Testis (tissue), 5 donors: ENCODE measurements at regions of chr11 and their contacts with region 1.

Region 1: DNA sequence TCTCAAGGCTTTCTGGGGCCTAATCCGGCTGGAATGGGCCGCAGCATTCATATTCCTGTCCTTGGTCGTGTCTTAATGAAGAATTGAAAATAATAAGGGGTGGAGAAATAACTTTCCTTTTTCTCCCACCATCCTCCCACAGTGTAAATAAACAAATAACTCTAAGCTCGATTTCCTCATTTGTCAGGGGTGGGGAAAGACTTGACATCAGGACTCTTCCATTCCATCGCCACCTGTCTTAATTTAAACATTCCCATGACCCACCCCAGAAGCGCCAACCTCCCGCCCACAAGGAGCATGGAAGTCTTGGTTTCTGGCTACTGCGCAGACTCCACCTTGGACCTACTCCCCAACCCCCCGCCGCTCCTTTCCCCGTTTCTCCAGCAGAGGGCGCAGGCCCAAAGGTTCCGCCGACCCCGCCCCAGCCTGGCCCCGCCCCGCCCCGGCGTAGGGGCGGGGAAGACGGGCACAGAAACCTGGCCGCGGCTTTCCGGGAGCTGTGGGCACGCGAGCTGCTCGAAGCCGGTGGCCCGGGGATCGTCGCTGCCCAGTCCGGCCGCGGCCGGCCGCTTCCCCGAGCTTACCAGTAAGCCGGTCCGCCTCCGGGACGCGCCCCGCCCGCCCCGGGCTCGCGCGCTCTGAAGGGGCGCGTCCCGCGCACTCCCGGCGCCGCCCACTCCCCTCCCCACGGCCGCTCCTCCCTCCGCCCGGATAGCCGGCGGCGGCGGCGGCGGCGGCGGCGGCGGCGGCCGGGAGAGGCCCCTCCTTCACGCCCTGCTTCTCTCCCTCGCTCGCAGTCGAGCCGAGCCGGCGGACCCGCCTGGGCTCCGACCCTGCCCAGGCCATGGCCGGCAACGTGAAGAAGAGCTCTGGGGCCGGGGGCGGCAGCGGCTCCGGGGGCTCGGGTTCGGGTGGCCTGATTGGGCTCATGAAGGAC is at the start of gene CBL:
- DNase-seq: peak; percentile 97
- H3K4me3 ChIP-seq: peak within 1 kb of the TSS; percentile 90 to 91
- H3K27ac ChIP-seq: peak within 1 kb of the TSS; percentile 86 to 98
- H3K4me1 ChIP-seq: no peaks in the 10 kb centered on the region
- H3K27me3 ChIP-seq: no peaks in the 10 kb centered on the region
- CTCF ChIP-seq: peak; percentile 64 to 93 (median 89)
- POLR2A ChIP-seq: no peak
- total RNA-seq, gene CBL: 59.3 to 65.7 TPM

Region 2: GRCh38 chr11:119101759-119102423 is 104.0 kb before region 1 on chr11 and contains the start of gene DPAGT1:
- intact Hi-C with region 1: no loop called
- DNase-seq: peak; percentile 97
- H3K4me3 ChIP-seq: peak within 1 kb of the TSS; percentile 76 to 85
- H3K27ac ChIP-seq: peak within 1 kb of the TSS; percentile 84 to 93
- H3K4me1 ChIP-seq: peaks cover 39% of the 10 kb centered on the region
- H3K27me3 ChIP-seq: no peaks in the 10 kb centered on the region
- CTCF ChIP-seq: no peak
- POLR2A ChIP-seq: no peak
- total RNA-seq, gene DPAGT1: 29.4 to 35.5 TPM

Region 3: GRCh38 chr11:119134389-119134978 is 71.4 kb before region 1 on chr11:
- intact Hi-C with region 1: no loop called
- DNase-seq: peak; percentile 34
- H3K4me3 ChIP-seq: no peak overlapping the region
- H3K27ac ChIP-seq: no peak overlapping the region
- H3K4me1 ChIP-seq: peaks cover 7% of the 10 kb centered on the region
- H3K27me3 ChIP-seq: no peaks in the 10 kb centered on the region
- CTCF ChIP-seq: peak in 2 of 3 experiments; percentile 33 to 51
- POLR2A ChIP-seq: no peak

Region 4: GRCh38 chr11:119323538-119324033 is 117.7 kb after region 1 on chr11:
- intact Hi-C with region 1: loop called (anchors 5 kb)
- DNase-seq: peak; percentile 90
- H3K4me3 ChIP-seq: no peak overlapping the region
- H3K27ac ChIP-seq: no peak overlapping the region
- H3K4me1 ChIP-seq: peaks cover 18% of the 10 kb centered on the region
- H3K27me3 ChIP-seq: no peaks in the 10 kb centered on the region
- CTCF ChIP-seq: peak; percentile 64 to 87 (median 84)
- POLR2A ChIP-seq: no peak